Tibial artery (tissue), 4 donors: ENCODE measurements at regions of chr21 and their contacts with region 1.

Region 1: GRCh38 chr21:24939291-24939690 is 668.0 kb downstream of the MRPL39 start:
- DNase-seq: no peak
- H3K4me3 ChIP-seq: no peak overlapping the region
- H3K27ac ChIP-seq: no peak overlapping the region
- H3K4me1 ChIP-seq: no peaks in the 10 kb centered on the region
- H3K27me3 ChIP-seq: no peaks in the 10 kb centered on the region
- CTCF ChIP-seq: no peak

Region 2: GRCh38 chr21:25220954-25221353 is 281.7 kb after region 1 on chr21:
- intact Hi-C with region 1: loop called (anchors 5 kb)
- DNase-seq: no peak
- H3K4me3 ChIP-seq: no peak overlapping the region
- H3K27ac ChIP-seq: no peak overlapping the region
- H3K4me1 ChIP-seq: no peaks in the 10 kb centered on the region
- H3K27me3 ChIP-seq: no peaks in the 10 kb centered on the region
- CTCF ChIP-seq: no peak